Astrocyte of the cerebellum (primary cell): ENCODE measurements at regions of chr12 and their contacts with region 1.

Region 1: DNA sequence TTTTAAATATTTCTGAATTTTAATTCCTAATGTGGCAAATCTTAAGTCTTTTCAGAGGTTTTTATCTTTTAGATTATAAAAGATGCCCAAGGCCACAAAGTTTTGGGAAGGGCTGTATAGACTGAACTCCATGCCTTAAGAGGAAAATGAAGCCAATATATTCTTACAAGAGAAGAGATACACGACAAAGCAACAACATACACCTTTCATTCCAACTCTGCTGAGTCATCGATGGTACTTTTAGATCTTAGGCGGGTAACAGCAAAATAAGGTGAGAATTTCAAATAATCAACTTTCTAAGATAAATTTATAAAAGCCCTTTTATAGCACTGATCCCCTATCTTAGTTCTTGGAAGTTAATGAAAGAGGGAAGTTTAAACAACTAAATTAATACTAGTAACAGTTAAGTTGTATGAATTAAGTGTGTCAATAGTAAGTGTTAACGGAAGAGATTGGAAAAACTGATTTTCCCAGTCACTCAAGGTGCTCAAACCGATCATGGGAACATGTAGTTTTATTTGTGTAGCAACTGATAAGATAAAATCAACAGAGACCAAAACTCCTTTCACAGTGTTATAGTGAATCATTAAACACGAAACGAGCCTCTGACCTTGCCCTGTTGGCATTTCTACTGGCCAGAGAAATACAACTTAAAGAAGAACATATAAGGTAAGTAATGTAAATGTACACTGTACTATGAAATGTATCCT is 18.8 kb upstream of the PIK3C2G start:
- DNase-seq: no peak
- H3K4me3 ChIP-seq: no peak overlapping the region
- CTCF ChIP-seq: no peak

Region 2: DNA sequence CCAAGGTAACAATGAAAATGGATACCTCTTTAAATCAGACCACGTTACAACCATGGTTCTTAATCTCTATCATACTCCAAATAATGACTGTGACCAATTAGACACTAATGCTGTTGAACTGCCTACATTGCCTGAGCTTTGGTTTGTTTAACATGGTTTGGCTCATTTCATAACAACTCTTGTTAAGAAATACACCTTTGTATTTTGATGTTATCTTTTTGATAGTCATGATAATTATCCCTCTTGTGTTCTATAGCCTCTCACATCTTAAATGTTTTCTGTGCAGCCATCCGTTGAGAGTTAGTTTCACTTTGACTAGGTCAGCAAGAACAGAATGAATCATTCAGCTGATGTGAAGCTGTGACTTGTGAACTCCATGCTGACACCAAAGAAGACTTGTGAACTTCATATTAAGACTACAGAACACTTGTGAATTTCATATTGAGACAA is 77.1 kb before region 1 on chr12:
- in situ Hi-C with region 1: no loop called
- DNase-seq: peak; percentile 29
- H3K4me3 ChIP-seq: no peak overlapping the region
- CTCF ChIP-seq: no peak

Region 3: DNA sequence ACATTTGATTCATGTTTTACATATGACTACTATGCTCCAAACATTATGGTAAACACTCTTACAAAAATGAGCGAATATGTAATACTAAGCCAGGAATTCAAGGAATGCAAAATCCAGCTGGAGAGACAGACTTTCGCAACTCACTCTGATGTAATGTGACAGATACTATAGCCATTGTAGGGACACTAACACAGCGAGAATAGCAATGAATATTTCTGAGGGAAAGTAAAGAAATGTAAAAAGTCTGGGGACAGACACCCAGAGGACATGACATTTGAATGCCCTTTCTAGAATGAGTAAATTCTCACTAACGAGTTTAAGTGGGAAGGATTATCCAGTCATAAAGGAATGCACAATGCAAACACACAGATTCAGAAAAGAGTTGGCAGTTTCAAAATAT is 140.7 kb after region 1 on chr12:
- in situ Hi-C with region 1: loop called (anchors 5 kb)
- DNase-seq: peak; percentile 67
- H3K4me3 ChIP-seq: no peak overlapping the region
- CTCF ChIP-seq: no peak